Activated CD8-positive, alpha-beta T cell treated with anti-CD3 and anti-CD28 coated beads for 36 hours (primary cell): ENCODE measurements at regions of chr1 and their contacts with region 1.

Region 1: DNA sequence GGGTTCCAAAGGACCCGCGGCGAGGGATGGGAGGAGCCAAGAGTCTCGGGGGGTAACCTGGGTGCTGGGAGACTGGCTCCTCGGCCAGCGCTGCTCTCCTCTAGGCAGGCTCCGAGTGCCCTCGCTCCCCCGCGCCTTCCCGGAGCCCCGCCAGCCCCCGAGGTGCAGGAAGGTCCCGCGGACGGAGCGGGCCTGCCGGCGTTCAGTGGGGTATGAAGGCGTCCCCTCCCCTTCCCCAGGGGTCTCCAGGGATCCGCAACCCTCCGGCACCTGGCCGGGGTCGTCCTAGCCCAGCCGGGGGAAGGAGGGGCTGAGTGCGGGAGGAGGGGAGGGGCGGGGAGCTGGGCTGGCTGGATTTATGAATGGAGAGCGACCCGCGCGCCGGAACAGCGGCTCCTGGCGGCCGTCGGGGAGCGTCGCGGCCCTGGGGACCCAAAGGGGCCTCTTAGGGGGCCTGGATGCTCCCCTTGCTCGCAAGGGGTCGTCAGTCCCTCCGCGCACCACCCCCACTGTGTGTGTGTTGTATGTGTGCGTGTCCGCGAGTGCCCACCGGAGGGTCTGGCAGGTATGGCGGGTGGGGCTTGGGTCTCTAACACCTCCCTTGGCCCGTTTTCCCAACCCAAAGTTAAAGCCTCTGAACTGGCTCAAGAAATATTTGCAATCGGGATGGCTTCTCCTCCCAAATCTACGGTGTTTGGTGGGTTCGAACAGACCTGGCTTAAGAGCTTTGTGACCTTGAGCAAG is 600 bp downstream of the HCRTR1 start:
- DNase-seq: peak; percentile 63
- ATAC-seq: peak; percentile 86
- H3K4me3 Mint-ChIP-seq: no peak overlapping the region
- H3K27ac Mint-ChIP-seq: no peak overlapping the region
- H3K4me1 Mint-ChIP-seq: peaks cover 2% of the 10 kb centered on the region
- H3K27me3 Mint-ChIP-seq: peaks cover 23% of the 10 kb centered on the region
- CTCF ChIP-seq: peak; percentile 95

Region 2: DNA sequence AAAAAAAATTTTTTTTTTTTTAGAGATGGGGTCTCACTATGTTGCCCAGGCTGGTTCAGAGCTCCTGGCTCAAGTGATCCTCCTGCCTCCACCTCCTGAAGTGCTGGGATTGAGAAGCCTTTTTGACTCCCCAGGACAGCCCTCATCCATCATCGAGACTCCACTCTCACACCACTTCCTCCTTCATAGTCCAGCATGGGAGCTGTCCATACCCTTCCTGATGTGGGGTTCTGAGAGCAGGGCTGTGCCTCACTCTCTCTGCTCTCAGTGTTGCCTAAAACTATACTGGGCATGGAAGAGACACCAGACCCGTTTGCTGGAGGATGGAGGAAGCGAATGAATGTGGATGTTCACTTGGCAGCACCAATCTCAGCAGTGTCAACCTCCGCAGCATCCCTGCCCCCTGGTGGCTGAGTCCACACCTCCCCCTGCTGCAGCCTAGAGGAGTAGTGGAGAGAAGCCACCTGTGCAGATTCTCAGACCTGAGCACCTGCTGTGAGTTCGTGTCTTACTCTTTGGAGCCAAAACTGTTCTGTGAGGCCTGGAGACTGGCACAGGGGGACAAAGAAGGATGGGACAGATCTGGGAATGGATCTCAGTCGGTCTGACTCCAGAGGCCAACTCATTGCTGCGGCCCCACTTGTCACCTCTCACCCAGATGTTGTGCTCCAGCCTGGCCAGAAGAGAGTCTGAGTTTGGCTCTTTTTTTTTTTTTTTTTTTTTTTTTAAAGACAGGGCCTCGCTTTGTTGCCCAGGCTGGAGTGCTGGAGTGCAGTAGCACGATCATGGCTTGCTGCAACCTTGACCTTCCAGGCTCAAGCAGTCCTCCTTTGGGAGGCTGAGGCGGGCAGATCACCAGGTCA is 24.1 kb before region 1 on chr1:
- CTCF ChIA-PET with region 1: interaction called, 11 read pairs
- POLR2A ChIA-PET with region 1: no interaction called
- intact Hi-C with region 1: no loop called
- DNase-seq: peak; percentile 87
- ATAC-seq: peak; percentile 95
- H3K4me3 Mint-ChIP-seq: no peak overlapping the region
- H3K27ac Mint-ChIP-seq: no peak overlapping the region
- H3K4me1 Mint-ChIP-seq: no peaks in the 10 kb centered on the region
- H3K27me3 Mint-ChIP-seq: peaks cover 11% of the 10 kb centered on the region
- CTCF ChIP-seq: peak; percentile 77